T-cell (primary cell): ENCODE measurements at regions of chr6 and their contacts with region 1.

Region 1: GRCh38 chr6:157830354-157831017 is 7.4 kb downstream of the SNX9 start:
- DNase-seq: peak in 1 of 35 experiments; percentile 17
- ATAC-seq: peak in 1 of 4 experiments; percentile 40
- H3K4me3 ChIP-seq: no peak overlapping the region
- H3K4me3 Mint-ChIP-seq: peak overlapping the region in 1 of 3 donors; percentile 55
- H3K27ac ChIP-seq: no peak overlapping the region
- H3K27ac Mint-ChIP-seq: no peak overlapping the region
- H3K4me1 ChIP-seq: peaks cover 14 to 16% of the 10 kb centered on the region in 2 experiments
- H3K4me1 Mint-ChIP-seq: peaks cover 70 to 74% (median 71%) of the 10 kb centered on the region in 3 donors
- H3K27me3 ChIP-seq: no peaks in the 10 kb centered on the region
- H3K27me3 Mint-ChIP-seq: no peaks in the 10 kb centered on the region

Region 2: DNA sequence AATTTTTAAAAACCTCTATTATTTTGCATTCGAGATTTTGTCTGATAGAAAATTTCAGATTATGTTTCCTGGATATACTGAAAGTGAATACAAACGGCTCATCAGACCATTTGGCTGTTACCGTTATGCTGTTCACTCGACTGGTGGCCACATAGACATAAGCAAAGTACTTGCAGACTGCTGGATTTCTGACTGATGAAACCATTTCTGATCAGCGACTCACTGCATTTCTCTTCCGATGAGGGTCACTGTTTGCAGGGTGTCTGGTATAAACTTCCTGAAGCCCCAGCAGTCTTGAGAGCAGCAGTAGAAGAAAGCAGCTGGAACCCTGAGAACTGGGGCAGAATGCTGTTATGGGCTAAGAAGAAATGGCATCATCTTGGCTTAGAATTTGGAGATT is 10.3 kb after region 1 on chr6:
- CTCF ChIA-PET with region 1: interaction called in 1 of 2 experiments, 10 read pairs
- POLR2A ChIA-PET with region 1: interaction called, 3 to 12 read pairs
- DNase-seq: no peak
- ATAC-seq: no peak
- H3K4me3 ChIP-seq: no peak overlapping the region
- H3K4me3 Mint-ChIP-seq: peak overlapping the region in 1 of 3 donors; percentile 7
- H3K27ac ChIP-seq: no peak overlapping the region
- H3K27ac Mint-ChIP-seq: no peak overlapping the region
- H3K4me1 ChIP-seq: peaks cover 0 to under 1% of the 10 kb centered on the region in 2 experiments
- H3K4me1 Mint-ChIP-seq: peaks cover 70 to 78% (median 75%) of the 10 kb centered on the region in 3 donors
- H3K27me3 ChIP-seq: no peaks in the 10 kb centered on the region
- H3K27me3 Mint-ChIP-seq: no peaks in the 10 kb centered on the region

Region 3: GRCh38 chr6:158441716-158442215 is 611.3 kb after region 1 on chr6:
- CTCF ChIA-PET with region 1: no interaction called
- POLR2A ChIA-PET with region 1: no interaction called
- DNase-seq: no peak
- ATAC-seq: no peak
- H3K4me3 ChIP-seq: no peak overlapping the region
- H3K4me3 Mint-ChIP-seq: no peak overlapping the region
- H3K27ac ChIP-seq: no peak overlapping the region
- H3K27ac Mint-ChIP-seq: no peak overlapping the region
- H3K4me1 ChIP-seq: no peaks in the 10 kb centered on the region
- H3K4me1 Mint-ChIP-seq: peaks cover 0 to 2% (median 0%) of the 10 kb centered on the region in 3 donors
- H3K27me3 ChIP-seq: no peaks in the 10 kb centered on the region
- H3K27me3 Mint-ChIP-seq: no peaks in the 10 kb centered on the region